Esophagus muscularis mucosa (tissue), 4 donors: ENCODE measurements at regions of chr16 and their contacts with region 1.

Region 1: GRCh38 chr16:66751303-66751991 is at the start of gene DYNC1LI2:
- DNase-seq: no peak
- H3K4me3 ChIP-seq: peak within 1 kb of the TSS; percentile 85 to 100 (median 93)
- H3K27ac ChIP-seq: peak within 1 kb of the TSS; percentile 89 to 96 (median 90)
- H3K4me1 ChIP-seq: peaks cover 30 to 57% (median 51%) of the 10 kb centered on the region in 4 donors
- H3K27me3 ChIP-seq: no peaks in the 10 kb centered on the region
- CTCF ChIP-seq: peak; percentile 91 to 98 (median 93)
- EP300 ChIP-seq: no peak
- POLR2A ChIP-seq: no peak
- total RNA-seq, gene DYNC1LI2: 167 to 203 (median 186) TPM

Region 2: GRCh38 chr16:66696669-66697630 is 54.5 kb before region 1 on chr16 and contains the start of gene CMTM4:
- intact Hi-C with region 1: loop called (anchors 5 kb)
- DNase-seq: no peak
- H3K4me3 ChIP-seq: peak within 1 kb of the TSS; percentile 67 to 93 (median 78)
- H3K27ac ChIP-seq: peak within 1 kb of the TSS; percentile 76 to 83 (median 82)
- H3K4me1 ChIP-seq: peaks cover 17 to 30% (median 24%) of the 10 kb centered on the region in 4 donors
- H3K27me3 ChIP-seq: no peaks in the 10 kb centered on the region
- CTCF ChIP-seq: peak; percentile 7 to 40 (median 23)
- EP300 ChIP-seq: no peak
- POLR2A ChIP-seq: no peak
- total RNA-seq, gene CMTM4: 9.8 to 19.8 (median 15.0) TPM

Region 3: DNA sequence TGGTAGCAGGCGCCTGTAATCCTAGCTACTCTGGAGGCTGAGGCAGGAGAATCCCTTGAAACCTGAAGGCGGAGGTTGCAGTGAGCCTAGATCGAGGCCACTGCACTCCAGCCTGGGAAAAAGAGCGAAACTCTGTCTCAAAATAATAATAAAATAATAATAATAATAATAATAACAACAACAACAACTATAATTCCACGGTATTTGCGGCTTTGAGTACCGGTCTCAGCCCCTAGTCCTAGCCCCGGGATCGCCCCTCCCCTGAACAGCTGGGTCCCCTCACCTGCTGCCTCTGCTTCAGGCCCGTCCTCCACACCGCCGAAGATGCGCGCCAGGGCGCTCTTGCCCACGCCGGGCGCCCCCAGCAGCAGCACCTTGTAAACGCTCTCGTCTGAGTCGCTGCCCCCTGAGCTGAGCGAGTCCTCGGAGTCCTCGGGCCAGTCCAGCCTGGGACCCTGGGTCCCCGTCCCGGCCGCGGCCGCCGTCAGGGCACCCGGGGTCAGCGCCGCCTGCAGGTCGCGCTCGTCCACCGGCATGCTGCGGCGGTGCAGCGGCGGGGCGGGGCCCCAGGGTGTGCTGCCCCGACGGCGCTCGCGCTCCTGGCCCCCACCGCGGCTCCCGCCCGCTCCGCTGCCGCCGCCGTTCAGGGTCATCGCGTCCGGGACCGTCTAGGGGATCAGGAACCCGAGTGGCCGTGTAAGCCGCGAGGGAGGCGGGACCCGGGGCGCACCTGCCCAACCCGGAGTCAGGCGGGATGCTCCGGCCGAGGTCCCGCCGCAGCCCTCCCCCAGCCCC is 173.3 kb after region 1 on chr16:
- intact Hi-C with region 1: no loop called
- DNase-seq: no peak
- H3K4me3 ChIP-seq: peak overlapping the region; percentile 72 to 77 (median 74)
- H3K27ac ChIP-seq: peak overlapping the region; percentile 92 to 95 (median 93)
- H3K4me1 ChIP-seq: peaks cover 53 to 92% (median 83%) of the 10 kb centered on the region in 4 donors
- H3K27me3 ChIP-seq: peaks cover 0 to 3% (median 0%) of the 10 kb centered on the region in 4 donors
- CTCF ChIP-seq: peak; percentile 47 to 63 (median 59)
- EP300 ChIP-seq: no peak
- POLR2A ChIP-seq: no peak

Region 4: DNA sequence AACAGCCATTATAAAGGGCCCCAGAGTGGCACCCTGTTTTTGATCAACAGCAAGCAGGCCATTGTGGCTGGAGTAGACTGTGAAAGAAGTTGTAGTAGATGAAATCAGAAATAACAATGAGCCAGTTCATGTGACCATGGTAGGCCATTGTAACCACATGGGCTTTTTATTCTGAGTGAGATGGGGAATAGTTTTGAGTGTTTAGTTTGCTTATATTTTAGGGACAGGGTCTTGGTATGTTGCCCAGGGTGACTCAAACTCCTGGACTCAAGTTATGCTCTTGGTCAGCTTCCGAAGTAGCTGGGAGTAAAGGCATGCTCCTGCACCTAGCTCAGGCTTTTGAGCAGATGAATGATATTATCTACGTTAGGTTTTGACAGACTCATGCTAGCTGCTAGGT is 289.5 kb after region 1 on chr16:
- intact Hi-C with region 1: no loop called
- DNase-seq: no peak
- H3K4me3 ChIP-seq: no peak overlapping the region
- H3K27ac ChIP-seq: no peak overlapping the region
- H3K4me1 ChIP-seq: peaks cover 0 to 32% (median 27%) of the 10 kb centered on the region in 4 donors
- H3K27me3 ChIP-seq: no peaks in the 10 kb centered on the region
- CTCF ChIP-seq: no peak
- EP300 ChIP-seq: no peak
- POLR2A ChIP-seq: no peak